HEK293T (cell line): ENCODE measurements at regions of chr2 and their contacts with region 1.

Region 1: DNA sequence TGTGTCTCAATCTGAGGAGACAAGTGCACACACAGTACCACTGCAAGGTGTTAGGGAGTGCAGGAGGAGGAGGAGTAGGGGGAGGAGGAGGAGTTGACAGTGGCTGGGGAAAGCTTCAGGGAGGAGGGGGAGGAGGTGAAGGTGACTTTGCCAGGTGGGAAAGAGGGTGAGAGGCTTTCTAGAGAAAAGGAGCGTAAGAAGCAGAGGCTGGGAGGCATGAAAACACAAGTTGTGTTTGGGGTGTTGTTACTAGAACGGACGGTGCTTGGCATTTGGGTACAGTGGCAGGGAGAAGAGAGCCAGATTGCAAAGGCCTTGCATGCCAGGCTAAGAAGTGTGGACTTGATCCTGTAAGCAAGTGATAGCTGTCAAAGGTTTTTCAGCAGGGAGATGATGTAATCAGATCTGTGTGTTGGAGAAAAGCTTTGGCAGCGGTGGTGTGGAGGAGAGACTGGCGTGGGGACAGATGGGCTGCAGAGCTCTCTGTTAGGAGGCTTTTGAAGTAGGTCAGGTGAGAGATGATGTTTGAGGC is 16.2 kb downstream of the TANC1 start:
- DNase-seq: no peak

Region 2: GRCh38 chr2:158953926-158954763 is 30.5 kb before region 1 on chr2:
- CTCF ChIA-PET with region 1: no interaction called
- POLR2A ChIA-PET with region 1: no interaction called
- DNase-seq: peak; percentile 71

Region 3: DNA sequence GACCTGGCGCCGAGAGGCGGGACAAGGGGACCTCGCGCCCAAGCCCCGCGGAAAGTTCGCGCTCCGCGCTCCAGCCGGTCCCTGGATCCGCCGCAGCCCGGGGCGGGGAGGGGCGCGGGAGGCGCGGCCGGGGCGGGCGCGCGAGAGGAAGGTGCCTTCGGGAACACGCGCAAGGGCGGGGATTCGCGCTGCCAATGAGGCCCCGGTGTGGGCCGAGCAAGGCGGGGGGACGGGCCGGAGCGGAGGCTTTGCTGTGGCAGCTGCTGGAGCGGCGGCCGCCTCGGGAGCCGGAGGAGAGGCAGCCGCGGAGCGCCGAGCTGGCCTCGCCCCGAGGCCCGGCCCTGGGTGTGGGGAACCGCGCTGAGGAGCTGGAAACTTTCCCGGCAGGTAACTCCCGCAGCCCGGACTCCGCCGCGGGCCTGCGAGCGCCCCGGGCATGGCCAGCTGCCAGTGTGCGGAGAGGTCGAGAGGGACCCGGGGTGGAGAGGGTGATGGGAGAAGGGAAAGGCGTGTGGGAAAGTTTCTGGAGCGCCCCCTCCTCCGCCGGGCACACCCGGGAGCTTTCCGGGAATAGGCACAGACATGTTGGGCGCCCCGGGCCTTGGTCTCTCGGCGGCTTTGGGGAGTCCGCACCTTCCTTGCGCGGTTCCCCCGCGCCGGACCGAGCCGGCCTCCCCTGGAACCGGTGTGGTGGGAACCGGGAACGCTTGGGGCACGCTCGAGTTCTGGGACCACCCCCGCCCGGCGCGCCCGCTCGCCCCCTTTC is 16.1 kb before region 1 on chr2 and contains the start of gene TANC1:
- CTCF ChIA-PET with region 1: no interaction called
- POLR2A ChIA-PET with region 1: interaction called, 12 read pairs
- DNase-seq: peak; percentile 78

Region 4: GRCh38 chr2:158996378-158996993 is 11.8 kb after region 1 on chr2:
- CTCF ChIA-PET with region 1: interaction called, 10 read pairs
- POLR2A ChIA-PET with region 1: interaction called, 4 read pairs
- DNase-seq: no peak

Region 5: GRCh38 chr2:159051661-159052060 is 67.0 kb after region 1 on chr2:
- CTCF ChIA-PET with region 1: interaction called, 10 read pairs
- POLR2A ChIA-PET with region 1: no interaction called
- DNase-seq: no peak